ENCODE measurements at regions of chr5 and their contacts with region 1.

Region 1: DNA sequence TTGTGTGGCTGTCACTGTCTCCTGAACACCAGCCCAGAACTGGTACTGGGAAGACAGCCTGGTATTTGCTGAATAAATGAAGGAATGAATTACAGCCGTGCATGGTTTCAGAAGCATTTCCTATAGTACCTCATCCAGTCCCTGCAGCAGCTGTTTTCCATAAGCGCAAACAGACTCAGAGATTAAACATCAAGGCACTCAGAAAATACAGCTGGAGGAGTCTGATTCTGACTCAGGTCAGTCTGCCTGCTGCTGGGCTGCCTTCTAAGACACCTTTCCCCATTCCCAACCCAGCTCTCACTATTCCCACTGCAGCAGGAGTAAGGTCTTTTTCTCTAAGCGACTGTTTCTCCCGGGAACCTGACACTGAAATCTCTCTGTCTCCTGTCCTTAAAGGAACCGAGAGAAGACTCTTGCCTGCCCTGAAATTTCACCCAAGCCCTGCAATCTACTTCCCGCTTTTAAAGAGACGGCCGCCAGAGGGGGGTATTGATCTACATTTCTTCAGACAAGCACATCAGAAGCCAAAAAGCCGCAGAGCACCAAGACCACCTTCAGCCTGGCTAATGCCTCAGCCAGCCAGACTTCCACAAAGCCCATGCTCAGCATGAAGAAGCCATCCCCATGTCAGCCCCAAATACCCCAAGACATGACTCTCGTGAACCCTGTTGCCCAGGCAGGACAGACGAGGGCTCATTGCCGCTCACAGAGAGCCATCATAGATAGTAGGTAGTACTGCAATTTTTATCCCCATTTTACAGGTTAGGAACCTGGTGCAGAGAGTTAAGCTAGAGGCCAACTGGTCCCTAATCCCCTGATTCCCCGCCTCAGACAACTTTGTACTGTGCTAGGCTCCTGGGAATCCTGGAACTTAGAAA is 5.4 kb upstream of the FOXI1 start:
- DNase-seq: peak; percentile 81 to 85
- H3K4me3 ChIP-seq: no peak overlapping the region
- H3K27ac ChIP-seq: no peak overlapping the region
- H3K4me1 ChIP-seq: no peaks in the 10 kb centered on the region
- H3K27me3 ChIP-seq: no peaks in the 10 kb centered on the region
- CTCF ChIP-seq: peak; percentile 38 to 81 (median 66)
- POLR2A ChIP-seq: no peak

Region 2: GRCh38 chr5:170186156-170186555 is 85.9 kb after region 1 on chr5:
- intact Hi-C with region 1: loop called (anchors 2 kb)
- DNase-seq: no peak
- H3K4me3 ChIP-seq: no peak overlapping the region
- H3K27ac ChIP-seq: no peak overlapping the region
- H3K4me1 ChIP-seq: no peaks in the 10 kb centered on the region
- H3K27me3 ChIP-seq: no peaks in the 10 kb centered on the region
- CTCF ChIP-seq: no peak
- POLR2A ChIP-seq: no peak

Region 3: GRCh38 chr5:170411100-170411499 is 310.8 kb after region 1 on chr5:
- intact Hi-C with region 1: loop called (anchors 10 kb)
- DNase-seq: no peak
- H3K4me3 ChIP-seq: no peak overlapping the region
- H3K27ac ChIP-seq: no peak overlapping the region
- H3K4me1 ChIP-seq: no peaks in the 10 kb centered on the region
- H3K27me3 ChIP-seq: no peaks in the 10 kb centered on the region
- CTCF ChIP-seq: no peak
- POLR2A ChIP-seq: no peak

Measured in thyroid gland (tissue), 4 donors.